Activated CD4-positive, alpha-beta T cell treated with anti-CD3 and anti-CD28 coated beads, Interleukin-2, amount 10 ng/mL, durations not matched to agents 24 days and 14 days (primary cell): ENCODE measurements at regions of chr17 and their contacts with region 1.

Region 1: GRCh38 chr17:51371732-51372151 is 111.4 kb downstream of the UTP18 start:
- DNase-seq: peak; percentile 83
- H3K4me3 Mint-ChIP-seq: no peak overlapping the region
- H3K27ac Mint-ChIP-seq: no peak overlapping the region
- H3K4me1 Mint-ChIP-seq: peaks cover 8% of the 10 kb centered on the region
- H3K27me3 Mint-ChIP-seq: no peaks in the 10 kb centered on the region

Region 2: GRCh38 chr17:51397361-51398127 is 25.8 kb after region 1 on chr17:
- intact Hi-C with region 1: no loop called
- DNase-seq: no peak
- H3K4me3 Mint-ChIP-seq: no peak overlapping the region
- H3K27ac Mint-ChIP-seq: no peak overlapping the region
- H3K4me1 Mint-ChIP-seq: no peaks in the 10 kb centered on the region
- H3K27me3 Mint-ChIP-seq: peaks cover 2% of the 10 kb centered on the region

Region 3: DNA sequence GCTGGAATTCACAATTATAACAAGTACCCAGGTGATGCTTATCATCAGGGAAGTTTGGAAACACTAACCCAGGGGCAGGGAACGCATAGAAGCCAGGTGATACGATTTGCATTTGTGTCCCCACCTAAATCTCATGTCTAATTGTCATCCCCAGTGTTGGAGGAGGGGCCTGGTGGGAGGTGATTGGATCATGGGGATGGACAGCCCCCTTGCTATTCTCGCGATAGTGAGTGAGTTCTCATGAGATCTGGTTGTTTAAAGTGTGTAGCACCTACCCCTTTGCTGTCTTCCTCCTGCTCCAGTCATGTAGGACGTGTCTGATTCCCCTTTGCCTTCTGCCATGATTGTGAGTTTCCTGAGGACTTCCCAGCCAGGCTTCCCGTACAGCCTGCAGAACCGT is 164.9 kb after region 1 on chr17:
- intact Hi-C with region 1: loop called (anchors 1 kb)
- DNase-seq: no peak
- H3K4me3 Mint-ChIP-seq: no peak overlapping the region
- H3K27ac Mint-ChIP-seq: no peak overlapping the region
- H3K4me1 Mint-ChIP-seq: peaks cover 6% of the 10 kb centered on the region
- H3K27me3 Mint-ChIP-seq: no peaks in the 10 kb centered on the region

Region 4: GRCh38 chr17:51640108-51640622 is 268.4 kb after region 1 on chr17:
- intact Hi-C with region 1: loop called (anchors 5 kb)
- DNase-seq: peak; percentile 70
- H3K4me3 Mint-ChIP-seq: no peak overlapping the region
- H3K27ac Mint-ChIP-seq: no peak overlapping the region
- H3K4me1 Mint-ChIP-seq: no peaks in the 10 kb centered on the region
- H3K27me3 Mint-ChIP-seq: peaks cover 7% of the 10 kb centered on the region

Region 5: GRCh38 chr17:52106638-52107261 is 735.0 kb after region 1 on chr17:
- intact Hi-C with region 1: loop called (anchors 5 kb)
- DNase-seq: peak; percentile 79
- H3K4me3 Mint-ChIP-seq: no peak overlapping the region
- H3K27ac Mint-ChIP-seq: no peak overlapping the region
- H3K4me1 Mint-ChIP-seq: no peaks in the 10 kb centered on the region
- H3K27me3 Mint-ChIP-seq: no peaks in the 10 kb centered on the region